Left cardiac atrium (tissue), 4 donors: ENCODE measurements at regions of chr12 and their contacts with region 1.

Region 1: GRCh38 chr12:67355578-67356379 is 86.6 kb downstream of the CAND1 start:
- DNase-seq: no peak
- ATAC-seq: peak; percentile 65 to 81

Region 2: GRCh38 chr12:67315661-67316060 is 40.1 kb before region 1 on chr12:
- intact Hi-C with region 1: no loop called
- DNase-seq: no peak
- ATAC-seq: no peak

Region 3: GRCh38 chr12:67400742-67401141 is 45.0 kb after region 1 on chr12:
- intact Hi-C with region 1: no loop called
- DNase-seq: no peak
- ATAC-seq: no peak

Region 4: GRCh38 chr12:67415473-67415872 is 59.7 kb after region 1 on chr12:
- intact Hi-C with region 1: loop called in 1 of 2 experiments (anchors 5 kb)
- DNase-seq: no peak
- ATAC-seq: peak; percentile 41 to 70

Region 5: DNA sequence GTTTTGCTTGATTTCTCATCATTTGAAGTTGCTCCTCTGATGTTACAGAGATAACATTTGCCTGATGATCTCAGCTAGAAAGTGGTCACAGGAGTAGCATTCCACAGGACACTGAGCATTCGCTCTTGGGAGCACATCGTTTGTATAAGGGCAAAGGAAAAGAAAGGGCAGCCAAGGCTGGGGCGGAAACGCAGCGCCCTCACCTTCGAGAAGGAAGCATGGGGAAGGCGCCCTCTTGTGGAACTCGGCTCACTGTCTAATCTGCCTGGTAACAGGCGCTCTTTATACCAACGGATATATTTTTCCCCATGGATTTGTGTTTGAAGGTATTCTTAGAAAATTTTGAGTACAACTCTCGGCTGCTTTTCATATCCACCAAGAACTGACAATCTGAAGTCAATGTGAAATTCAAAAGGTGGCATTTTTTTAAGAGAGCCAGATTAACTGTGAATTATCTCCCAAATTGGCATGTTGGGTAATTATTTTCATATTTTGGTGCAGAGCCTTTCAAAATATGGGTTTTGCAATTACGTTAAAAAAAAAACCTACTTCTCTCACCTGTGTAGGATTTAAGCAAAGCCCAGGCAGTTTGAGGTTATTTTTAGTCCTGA is 86.1 kb after region 1 on chr12:
- intact Hi-C with region 1: loop called in 1 of 2 experiments (anchors 10 kb)
- DNase-seq: peak; percentile 89
- ATAC-seq: peak; percentile 96 to 98

Region 6: DNA sequence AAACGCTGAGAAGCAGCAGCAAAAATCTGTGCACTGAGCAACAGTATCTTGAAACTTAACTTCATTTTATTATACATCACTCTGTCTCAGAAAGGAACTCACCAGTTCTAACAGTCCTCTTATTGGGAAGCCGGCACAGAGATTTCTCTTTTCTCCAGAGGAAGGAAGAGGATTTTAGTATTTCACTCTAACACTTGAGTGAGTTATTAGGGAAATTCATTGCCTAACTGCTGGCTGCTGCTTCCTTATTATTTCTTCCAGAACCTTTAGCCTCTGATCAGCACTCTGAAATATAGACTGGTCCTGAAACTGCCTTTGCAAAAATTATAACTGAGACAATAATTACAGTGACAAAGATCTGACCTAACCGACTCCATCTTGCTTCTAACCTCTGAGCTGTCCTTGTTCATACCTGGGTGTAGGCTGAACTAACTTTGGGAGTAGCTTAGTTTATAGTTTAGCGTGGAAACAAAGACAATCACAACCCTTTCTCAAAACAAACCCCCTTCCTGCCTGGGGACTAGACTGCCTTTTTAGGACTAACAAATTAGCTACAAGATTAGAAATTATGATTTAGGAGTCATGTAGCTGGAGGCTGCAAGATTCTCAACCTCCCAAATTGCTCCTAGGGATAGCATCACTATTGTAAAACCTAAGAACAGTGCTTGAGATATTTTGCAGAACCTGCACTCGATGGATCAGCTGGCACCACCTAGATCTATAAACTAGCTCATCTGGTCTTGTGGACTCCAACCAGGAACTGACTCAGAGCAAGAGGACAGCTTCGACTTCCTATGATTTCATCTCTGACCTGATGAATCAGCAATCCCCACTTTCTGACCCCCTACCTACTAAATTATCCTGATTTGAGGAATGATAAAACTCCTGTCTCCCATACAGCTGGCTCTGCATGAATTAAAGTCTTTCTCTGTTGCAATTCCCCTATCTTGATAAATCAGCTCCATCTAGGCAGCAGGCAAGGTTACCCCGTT is 410.3 kb after region 1 on chr12:
- intact Hi-C with region 1: no loop called
- DNase-seq: no peak
- ATAC-seq: no peak